Dorsolateral prefrontal cortex (tissue), 120 donors: ENCODE measurements at regions of chr4 and their contacts with region 1.

Region 1: GRCh38 chr4:7843831-7844593 is 95.6 kb downstream of the AFAP1 start:
- DNase-seq: peak in 9 of 10 donors; percentile 55 to 72 (median 66)
- H3K4me3 ChIP-seq: no peak overlapping the region
- H3K27ac ChIP-seq: peak overlapping the region in 4 of 59 donors; percentile 4 to 19 (median 17)
- H3K27me3 ChIP-seq: no peaks in the 10 kb centered on the region
- CTCF ChIP-seq: peak; percentile 35 to 75 (median 60)

Region 2: GRCh38 chr4:7987148-7987989 is 143.4 kb after region 1 on chr4:
- intact Hi-C with region 1: loop called in 1 of 2 experiments (anchors 2 kb)
- DNase-seq: peak in 8 of 10 donors; percentile 61 to 84 (median 78)
- H3K4me3 ChIP-seq: no peak overlapping the region
- H3K27ac ChIP-seq: no peak overlapping the region
- H3K27me3 ChIP-seq: no peaks in the 10 kb centered on the region
- CTCF ChIP-seq: peak; percentile 61 to 94 (median 87)